Dendritic cell treated with granulocyte-macrophage colony-stimulating factor and Interleukin-4, amounts not matched to agents 40 ng/mL and 50 ng/mL, for 4 days (primary cell): ENCODE measurements at regions of chr7 and their contacts with region 1.

Region 1: DNA sequence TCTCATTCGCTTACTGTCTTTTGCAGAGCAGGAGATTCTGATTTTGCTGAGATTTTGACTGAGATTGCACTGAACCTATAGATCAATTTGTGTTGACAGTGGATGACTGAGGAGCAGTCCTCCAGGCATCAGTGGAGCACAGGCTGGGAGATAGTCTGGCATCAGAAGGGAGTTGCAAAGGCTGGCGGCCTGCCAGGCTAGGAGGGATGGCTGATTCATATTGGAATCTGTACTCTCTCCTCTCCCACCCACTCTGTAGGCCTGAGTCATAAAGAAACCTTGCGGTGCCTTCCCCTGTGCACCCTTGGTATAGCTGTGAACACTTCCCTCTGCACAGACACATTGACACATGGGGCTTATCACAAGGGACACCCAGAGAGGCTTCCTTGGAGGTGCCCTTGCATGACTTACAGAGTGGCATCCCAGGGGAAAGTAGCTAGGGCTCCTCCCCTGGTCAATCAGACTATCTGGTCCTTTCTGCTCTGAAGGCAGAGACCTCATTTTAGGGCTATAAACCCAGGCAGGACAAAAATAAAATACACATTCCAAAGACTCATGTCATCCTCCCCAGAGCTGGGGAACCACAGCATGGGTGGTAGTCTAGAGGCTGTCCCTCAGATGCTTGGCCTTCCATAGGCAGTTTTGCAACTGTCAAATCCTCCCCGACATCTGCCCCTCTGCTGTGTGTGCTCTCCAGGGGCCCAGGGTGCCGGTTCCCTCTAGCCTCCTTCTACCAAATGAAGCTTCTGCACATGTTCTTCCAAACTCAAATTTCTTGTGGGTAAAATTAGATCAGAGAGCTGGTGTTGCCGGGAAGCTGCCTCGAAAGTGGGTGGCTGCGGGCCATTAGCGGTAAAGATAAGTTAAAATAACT is 37.4 kb upstream of the EEPD1 start:
- H3K4me3 Mint-ChIP-seq: no peak overlapping the region
- H3K27ac Mint-ChIP-seq: peak overlapping the region; percentile 42
- H3K4me1 Mint-ChIP-seq: peaks cover 58% of the 10 kb centered on the region
- H3K27me3 Mint-ChIP-seq: peaks cover 10% of the 10 kb centered on the region

Region 2: DNA sequence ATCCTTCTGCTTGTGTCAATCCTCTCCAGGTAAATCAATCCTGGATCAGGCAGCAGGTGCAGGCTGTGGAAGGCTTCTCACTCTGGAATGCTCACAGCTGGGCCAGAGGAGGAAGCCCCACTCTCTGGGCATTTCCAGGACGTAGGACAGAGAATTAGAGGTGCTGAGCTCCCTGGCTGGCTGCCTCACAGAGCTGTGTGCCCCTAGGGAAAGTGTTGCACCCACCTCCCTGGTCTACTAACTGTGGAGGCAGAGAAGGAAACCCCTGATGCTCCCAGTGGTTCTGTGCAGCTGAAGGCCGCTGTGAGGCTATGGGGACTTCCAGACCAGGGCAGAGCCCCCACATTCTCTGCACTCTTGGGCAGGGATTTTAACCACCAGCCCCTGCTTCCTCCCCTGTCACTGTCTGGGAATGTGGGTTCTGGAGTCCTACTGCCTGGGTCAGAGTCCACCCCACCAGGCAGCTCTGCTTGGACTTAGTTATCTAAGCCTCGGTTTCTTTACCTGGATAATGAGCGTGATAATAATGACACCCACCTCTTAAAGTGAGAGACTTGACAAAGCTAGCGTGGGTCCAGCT is 36.1 kb before region 1 on chr7:
- intact Hi-C with region 1: loop called (anchors 2 kb)
- H3K4me3 Mint-ChIP-seq: no peak overlapping the region
- H3K27ac Mint-ChIP-seq: no peak overlapping the region
- H3K4me1 Mint-ChIP-seq: peaks cover 7% of the 10 kb centered on the region
- H3K27me3 Mint-ChIP-seq: peaks cover 13% of the 10 kb centered on the region

Region 3: GRCh38 chr7:36152756-36153570 is 37.3 kb after region 1 on chr7 and contains the start of gene EEPD1:
- intact Hi-C with region 1: loop called (anchors 2 kb)
- H3K4me3 Mint-ChIP-seq: peak within 1 kb of the TSS; percentile 88
- H3K27ac Mint-ChIP-seq: peak within 1 kb of the TSS; percentile 89
- H3K4me1 Mint-ChIP-seq: peaks cover 71% of the 10 kb centered on the region
- H3K27me3 Mint-ChIP-seq: no peaks in the 10 kb centered on the region

Region 4: DNA sequence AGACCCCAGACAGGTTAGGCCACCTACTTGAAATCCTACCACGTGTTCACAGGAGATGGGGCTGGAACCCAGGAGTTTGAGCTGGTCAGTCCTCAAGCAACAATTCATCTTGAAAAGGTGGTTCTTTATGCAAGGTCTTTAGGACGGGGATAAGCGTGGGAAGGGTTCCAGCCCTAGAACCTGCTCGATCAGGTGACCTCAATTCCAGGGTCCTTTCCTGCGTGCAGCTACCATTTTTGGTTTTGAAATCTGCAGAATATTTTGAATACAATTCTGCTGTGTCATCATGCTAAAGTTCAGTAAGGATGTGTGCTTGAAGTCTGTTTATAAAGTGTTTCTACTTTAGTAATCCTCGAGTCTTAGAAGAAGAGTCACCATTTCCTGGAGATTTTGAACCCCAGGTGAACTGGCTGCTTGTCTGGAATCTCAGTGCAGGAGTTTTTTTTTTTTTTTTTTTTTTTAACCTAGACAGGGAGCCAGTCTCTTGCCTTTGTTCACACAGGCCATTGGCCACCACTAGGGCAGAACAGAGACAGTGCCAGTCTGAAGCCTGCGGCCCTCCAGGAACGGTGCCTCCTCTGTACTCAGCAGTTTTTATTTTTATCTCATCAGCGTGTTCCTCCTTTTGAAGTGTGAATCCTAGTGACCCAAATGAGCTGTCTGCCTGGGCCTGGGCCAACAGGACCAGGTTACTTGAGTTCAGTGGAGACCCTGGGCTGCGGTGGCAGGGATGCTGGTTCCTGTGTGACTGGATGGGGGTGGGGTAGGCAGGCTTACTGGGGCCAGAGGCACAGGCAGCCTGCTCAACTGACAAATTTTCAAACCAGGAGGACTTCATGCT is 92.0 kb after region 1 on chr7:
- intact Hi-C with region 1: loop called (anchors 1 kb)
- H3K4me3 Mint-ChIP-seq: no peak overlapping the region
- H3K27ac Mint-ChIP-seq: peak overlapping the region; percentile 90
- H3K4me1 Mint-ChIP-seq: peaks cover 81% of the 10 kb centered on the region
- H3K27me3 Mint-ChIP-seq: no peaks in the 10 kb centered on the region